GM12878 (cell line): ENCODE measurements at regions of chr15 and their contacts with region 1.

Region 1: GRCh38 chr15:66497502-66498455 is at the start of gene SNAPC5:
- DNase-seq: peak; percentile 72
- ATAC-seq: peak; percentile 90
- H3K4me3 ChIP-seq: peak within 1 kb of the TSS; percentile 87
- H3K27ac ChIP-seq: peak within 1 kb of the TSS; percentile 80
- H3K4me1 ChIP-seq: peaks cover 4% of the 10 kb centered on the region; the same call in 1 of the 2 replicates
- H3K27me3 ChIP-seq: no peaks in the 10 kb centered on the region
- CTCF ChIP-seq: peak; percentile 85 to 98 (median 94)
- EP300 ChIP-seq: no peak
- POLR2A ChIP-seq: peak; percentile 93
- RAD21 ChIP-seq: no peak; the same call in 1 of the 2 replicates
- polyA plus RNA-seq, gene SNAPC5: 53.0 to 53.5 TPM

Region 2: DNA sequence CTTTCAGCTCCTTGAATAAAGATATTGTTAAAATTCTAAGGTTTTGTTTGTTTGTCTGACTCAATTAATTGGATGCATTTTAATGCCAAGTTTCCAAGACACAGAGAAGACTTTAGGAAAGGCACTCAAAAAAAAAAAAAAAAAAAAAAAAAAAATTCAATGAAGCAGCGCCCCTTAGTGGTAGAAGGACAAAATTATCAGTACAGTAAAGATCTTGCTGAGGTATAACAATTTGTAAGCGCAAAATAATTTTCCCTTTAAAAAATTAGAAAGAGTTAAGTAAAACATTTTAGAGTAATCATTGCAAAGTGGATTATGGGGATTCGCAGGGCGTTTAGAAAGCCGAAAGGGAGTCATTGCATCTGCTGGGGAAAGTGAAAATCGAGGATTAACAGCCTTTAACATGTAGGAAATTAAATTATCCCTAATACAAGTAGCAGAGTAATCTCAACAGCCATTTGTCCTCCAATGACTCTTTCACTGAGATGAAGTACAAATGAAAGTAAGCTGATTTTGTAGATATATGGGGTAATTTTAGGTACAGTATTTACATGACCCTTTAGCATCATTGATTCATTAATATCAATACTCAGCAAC is 210.2 kb before region 1 on chr15:
- CTCF ChIA-PET with region 1: interaction called, 103 read pairs
- POLR2A ChIA-PET with region 1: no interaction called
- RAD21 ChIA-PET with region 1: interaction called, 10 read pairs
- SMC1A ChIA-PET with region 1: interaction called, 7 read pairs
- in situ Hi-C with region 1: no loop called
- intact Hi-C with region 1: loop called (anchors 5 kb)
- DNase-seq: no peak
- ATAC-seq: peak; percentile 34; the same call in 2 of the 3 replicates
- H3K4me3 ChIP-seq: no peak overlapping the region
- H3K27ac ChIP-seq: no peak overlapping the region
- H3K4me1 ChIP-seq: no peaks in the 10 kb centered on the region; the same call in 1 of the 2 replicates
- H3K27me3 ChIP-seq: no peaks in the 10 kb centered on the region
- CTCF ChIP-seq: peak; percentile 42 to 56 (median 51)
- EP300 ChIP-seq: no peak
- POLR2A ChIP-seq: no peak
- RAD21 ChIP-seq: peak; percentile 59

Region 3: DNA sequence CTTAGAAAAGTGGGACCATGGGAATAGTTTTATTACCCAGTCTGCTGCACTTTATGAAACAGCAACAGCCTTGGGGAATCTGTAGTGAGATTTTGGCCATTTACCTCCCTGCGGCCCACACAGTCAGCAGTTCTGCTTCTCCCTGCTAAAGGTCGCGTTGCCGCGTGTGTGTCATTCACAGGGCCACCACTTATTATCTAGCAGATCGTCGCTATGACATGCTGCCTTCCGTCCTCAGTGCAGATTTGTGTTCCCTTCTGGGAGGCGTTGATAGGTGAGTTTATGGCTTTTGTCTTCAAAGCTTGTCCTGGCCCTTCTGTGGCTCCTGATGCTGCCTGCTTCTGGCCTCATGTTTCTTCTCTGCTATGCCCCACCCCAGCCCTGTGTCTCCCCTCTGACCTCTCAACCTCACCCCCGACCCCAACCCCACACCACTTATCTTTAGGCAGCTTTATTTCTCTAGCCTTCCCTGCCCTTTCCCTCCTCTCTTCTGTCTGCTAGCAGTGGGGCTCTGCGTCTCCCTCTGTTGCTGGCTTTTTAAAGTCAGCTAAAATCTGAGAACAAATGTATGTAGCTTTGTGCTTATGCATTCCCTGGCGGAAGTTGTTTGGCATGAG is 174.4 kb before region 1 on chr15:
- CTCF ChIA-PET with region 1: interaction called, 11 read pairs
- POLR2A ChIA-PET with region 1: no interaction called
- RAD21 ChIA-PET with region 1: no interaction called
- SMC1A ChIA-PET with region 1: no interaction called
- in situ Hi-C with region 1: no loop called
- intact Hi-C with region 1: no loop called
- DNase-seq: no peak
- ATAC-seq: no peak
- H3K4me3 ChIP-seq: no peak overlapping the region
- H3K27ac ChIP-seq: no peak overlapping the region
- H3K4me1 ChIP-seq: no peaks in the 10 kb centered on the region
- H3K27me3 ChIP-seq: no peaks in the 10 kb centered on the region
- CTCF ChIP-seq: no peak
- EP300 ChIP-seq: no peak
- POLR2A ChIP-seq: no peak
- RAD21 ChIP-seq: no peak

Region 4: DNA sequence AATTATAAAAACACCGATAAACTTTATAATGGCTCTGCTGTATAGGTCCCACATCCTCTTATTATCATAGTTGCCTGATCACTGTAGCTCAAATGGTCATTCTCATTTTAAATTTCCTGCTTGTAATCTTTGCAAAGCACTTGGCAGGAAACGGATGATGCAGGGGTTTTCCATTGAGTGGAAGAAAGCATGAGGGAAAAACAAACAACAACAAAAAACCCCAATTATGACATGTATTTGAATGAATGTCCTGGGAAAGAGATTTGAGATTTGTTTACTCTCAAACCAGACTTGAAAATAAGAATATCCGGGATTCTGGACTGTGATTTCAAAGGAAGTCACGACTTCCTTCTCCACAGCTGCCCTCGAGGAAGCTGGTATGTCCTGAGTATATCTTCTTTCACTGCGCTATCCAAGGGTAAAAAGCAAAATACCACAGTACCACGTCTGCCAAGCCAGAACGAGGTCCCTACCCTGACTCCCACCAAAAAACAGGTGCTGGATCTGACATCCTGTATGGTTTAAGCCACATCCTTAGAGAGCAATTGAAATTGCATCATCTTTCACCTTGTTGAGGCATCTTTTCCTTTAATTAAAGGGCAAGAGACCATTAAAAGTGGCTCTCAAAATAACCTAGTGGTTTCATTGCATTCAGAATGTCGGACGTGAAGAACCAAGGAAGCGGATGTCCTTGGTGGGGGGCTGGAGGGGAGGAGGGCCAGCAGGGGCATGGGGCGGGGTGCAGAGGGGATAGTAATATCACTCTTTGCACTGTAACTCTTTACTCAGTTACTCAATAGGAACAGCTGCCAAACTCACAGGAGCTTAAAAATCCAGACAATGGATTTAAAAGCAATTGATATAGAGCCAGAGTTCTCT is 127.8 kb before region 1 on chr15:
- CTCF ChIA-PET with region 1: interaction called, 18 read pairs
- POLR2A ChIA-PET with region 1: no interaction called
- RAD21 ChIA-PET with region 1: no interaction called
- SMC1A ChIA-PET with region 1: no interaction called
- in situ Hi-C with region 1: no loop called
- intact Hi-C with region 1: no loop called
- DNase-seq: peak; percentile 68
- ATAC-seq: peak; percentile 87
- H3K4me3 ChIP-seq: peak overlapping the region; percentile 20; the same call in 1 of the 2 replicates
- H3K27ac ChIP-seq: peak overlapping the region; percentile 96
- H3K4me1 ChIP-seq: peaks cover 6% of the 10 kb centered on the region
- H3K27me3 ChIP-seq: no peaks in the 10 kb centered on the region
- CTCF ChIP-seq: no peak
- EP300 ChIP-seq: no peak
- POLR2A ChIP-seq: peak; percentile 53; the same call in 1 of the 2 replicates
- RAD21 ChIP-seq: 0 out of 2 replicates have a peak, but pooled peaks have one; percentile 0

Region 5: DNA sequence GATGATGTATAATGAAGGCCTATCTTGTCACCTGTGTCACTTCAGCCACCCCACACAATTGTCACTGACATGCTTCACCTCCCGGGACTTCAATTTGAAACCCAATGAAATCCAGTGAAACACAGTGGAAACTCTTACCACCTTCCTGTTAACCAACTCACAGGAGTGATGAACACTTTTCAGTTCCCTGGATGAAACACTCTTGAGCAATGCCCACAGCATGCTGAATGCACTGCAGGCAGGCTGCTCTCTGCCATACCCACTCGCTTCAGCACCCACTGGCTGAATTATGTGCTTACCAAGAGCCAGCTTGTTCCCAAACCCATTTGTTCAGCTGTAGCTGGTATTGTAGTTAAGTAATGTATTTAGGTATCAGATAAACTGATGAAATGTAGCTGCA is 64.1 kb before region 1 on chr15:
- CTCF ChIA-PET with region 1: interaction called, 12 read pairs
- POLR2A ChIA-PET with region 1: no interaction called
- RAD21 ChIA-PET with region 1: interaction called, 3 read pairs
- SMC1A ChIA-PET with region 1: interaction called, 7 read pairs
- in situ Hi-C with region 1: no loop called
- intact Hi-C with region 1: no loop called
- DNase-seq: no peak
- ATAC-seq: no peak; the same call in 2 of the 3 replicates
- H3K4me3 ChIP-seq: no peak overlapping the region
- H3K27ac ChIP-seq: no peak overlapping the region
- H3K4me1 ChIP-seq: peaks cover 36% of the 10 kb centered on the region
- H3K27me3 ChIP-seq: no peaks in the 10 kb centered on the region
- CTCF ChIP-seq: no peak
- EP300 ChIP-seq: no peak
- POLR2A ChIP-seq: no peak
- RAD21 ChIP-seq: no peak

Region 6: GRCh38 chr15:66558300-66558699 is 60.5 kb after region 1 on chr15:
- CTCF ChIA-PET with region 1: no interaction called
- POLR2A ChIA-PET with region 1: no interaction called
- RAD21 ChIA-PET with region 1: no interaction called
- SMC1A ChIA-PET with region 1: no interaction called
- in situ Hi-C with region 1: no loop called
- intact Hi-C with region 1: no loop called
- DNase-seq: no peak
- ATAC-seq: no peak
- H3K4me3 ChIP-seq: no peak overlapping the region
- H3K27ac ChIP-seq: no peak overlapping the region
- H3K4me1 ChIP-seq: no peaks in the 10 kb centered on the region
- H3K27me3 ChIP-seq: no peaks in the 10 kb centered on the region
- CTCF ChIP-seq: no peak
- EP300 ChIP-seq: no peak
- POLR2A ChIP-seq: no peak
- RAD21 ChIP-seq: no peak